Endothelial cell of umbilical vein (primary cell): ENCODE measurements at regions of chr13 and their contacts with region 1.

Region 1: DNA sequence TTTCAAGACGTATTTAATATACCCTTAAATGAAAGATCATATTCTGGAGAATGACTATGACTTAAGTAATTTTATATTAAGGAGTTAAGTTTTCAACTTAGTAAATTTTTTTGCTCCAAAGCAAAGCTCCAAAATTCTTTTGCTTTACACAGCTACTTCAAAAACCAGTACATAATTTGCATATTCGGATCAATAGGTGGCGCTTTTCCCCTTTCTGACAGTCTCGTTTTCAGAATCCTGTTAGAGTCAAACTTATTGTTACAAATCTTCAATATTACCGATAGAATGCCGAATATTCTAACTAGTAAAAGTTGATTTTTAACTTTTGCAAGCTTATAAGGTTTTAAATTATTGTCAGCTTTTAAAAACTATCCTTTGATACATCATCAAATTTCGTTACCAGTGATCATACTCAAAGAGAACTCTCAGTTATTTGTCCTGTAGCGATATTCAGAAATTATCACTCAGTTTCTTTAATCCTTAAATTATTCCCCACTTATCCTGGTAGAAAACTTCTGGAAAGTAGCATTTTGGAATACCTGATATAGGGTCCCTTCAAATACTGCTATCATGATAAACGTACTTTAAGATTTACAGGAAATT is 852.7 kb upstream of the KLHL1 start:
- DNase-seq: peak; percentile 65
- H3K4me3 ChIP-seq: no peak overlapping the region
- H3K27ac ChIP-seq: no peak overlapping the region
- H3K4me1 ChIP-seq: no peaks in the 10 kb centered on the region
- H3K27me3 ChIP-seq: no peaks in the 10 kb centered on the region
- CTCF ChIP-seq: peak; percentile 37 to 53
- POLR2A ChIP-seq: no peak

Region 2: GRCh38 chr13:70623239-70623638 is 337.7 kb before region 1 on chr13:
- CTCF ChIA-PET with region 1: interaction called, 9 read pairs
- POLR2A ChIA-PET with region 1: no interaction called
- dilution Hi-C with region 1: no loop called
- intact Hi-C with region 1: loop called (anchors 1 kb)
- DNase-seq: peak; percentile 57
- H3K4me3 ChIP-seq: no peak overlapping the region
- H3K27ac ChIP-seq: no peak overlapping the region
- H3K4me1 ChIP-seq: no peaks in the 10 kb centered on the region
- H3K27me3 ChIP-seq: no peaks in the 10 kb centered on the region
- CTCF ChIP-seq: no peak
- POLR2A ChIP-seq: no peak

Region 3: DNA sequence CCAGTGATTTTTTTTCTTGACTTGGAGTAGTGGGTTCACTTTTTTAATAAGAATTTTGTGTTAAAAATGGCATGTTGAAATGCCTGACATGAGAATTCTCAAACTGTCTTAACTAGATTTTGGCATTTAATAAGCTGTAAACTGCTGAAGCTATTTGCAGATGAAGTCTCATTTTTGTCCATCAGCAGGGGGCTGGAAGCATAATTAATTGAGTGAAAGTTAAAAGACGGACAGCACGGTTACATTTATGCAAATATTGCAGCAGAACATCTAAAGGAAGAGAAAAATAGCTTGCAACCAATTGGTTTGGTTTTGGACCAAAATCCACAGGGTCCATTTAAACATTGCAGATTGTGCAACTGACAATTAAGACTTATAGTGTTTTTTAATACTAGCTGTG is 15.4 kb before region 1 on chr13:
- CTCF ChIA-PET with region 1: interaction called, 11 read pairs
- POLR2A ChIA-PET with region 1: no interaction called
- dilution Hi-C with region 1: no loop called
- intact Hi-C with region 1: no loop called
- DNase-seq: no peak
- H3K4me3 ChIP-seq: no peak overlapping the region
- H3K27ac ChIP-seq: no peak overlapping the region
- H3K4me1 ChIP-seq: no peaks in the 10 kb centered on the region
- H3K27me3 ChIP-seq: no peaks in the 10 kb centered on the region
- CTCF ChIP-seq: no peak
- POLR2A ChIP-seq: no peak

Region 4: GRCh38 chr13:71879129-71879535 is 918.2 kb after region 1 on chr13:
- CTCF ChIA-PET with region 1: interaction called, 42 read pairs
- POLR2A ChIA-PET with region 1: no interaction called
- dilution Hi-C with region 1: no loop called
- intact Hi-C with region 1: loop called (anchors 2 kb)
- DNase-seq: peak; percentile 75
- H3K4me3 ChIP-seq: no peak overlapping the region
- H3K27ac ChIP-seq: no peak overlapping the region
- H3K4me1 ChIP-seq: no peaks in the 10 kb centered on the region
- H3K27me3 ChIP-seq: no peaks in the 10 kb centered on the region
- CTCF ChIP-seq: peak; percentile 39 to 61
- POLR2A ChIP-seq: no peak

Region 5: DNA sequence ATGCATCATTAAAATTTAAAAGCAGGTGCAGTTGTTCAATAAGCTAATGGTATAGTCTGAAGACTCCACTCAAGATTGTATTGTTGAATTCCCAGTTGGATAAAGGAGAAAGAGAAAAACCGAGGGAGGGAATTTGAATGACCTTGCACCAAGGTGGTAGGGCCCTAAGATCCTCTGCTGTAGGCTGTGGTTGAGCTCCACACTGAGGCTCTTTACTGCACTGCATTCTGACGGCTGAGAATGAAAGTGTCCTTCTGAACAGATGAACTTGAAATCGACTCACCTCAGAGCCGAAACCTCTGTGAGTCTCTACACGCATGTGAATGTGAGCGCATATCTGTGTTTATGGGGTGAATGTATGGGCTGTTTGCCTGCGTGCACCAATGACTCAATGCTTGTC is 1295.0 kb after region 1 on chr13:
- CTCF ChIA-PET with region 1: interaction called, 3 read pairs
- POLR2A ChIA-PET with region 1: no interaction called
- dilution Hi-C with region 1: no loop called
- intact Hi-C with region 1: loop called (anchors 2 kb)
- DNase-seq: peak; percentile 58
- H3K4me3 ChIP-seq: no peak overlapping the region
- H3K27ac ChIP-seq: no peak overlapping the region
- H3K4me1 ChIP-seq: no peaks in the 10 kb centered on the region
- H3K27me3 ChIP-seq: peaks cover 0 to 2% of the 10 kb centered on the region in 2 experiments
- CTCF ChIP-seq: peak; percentile 23 to 53
- POLR2A ChIP-seq: no peak